ENCODE measurements at regions of chr7 and their contacts with region 1.

Region 1: DNA sequence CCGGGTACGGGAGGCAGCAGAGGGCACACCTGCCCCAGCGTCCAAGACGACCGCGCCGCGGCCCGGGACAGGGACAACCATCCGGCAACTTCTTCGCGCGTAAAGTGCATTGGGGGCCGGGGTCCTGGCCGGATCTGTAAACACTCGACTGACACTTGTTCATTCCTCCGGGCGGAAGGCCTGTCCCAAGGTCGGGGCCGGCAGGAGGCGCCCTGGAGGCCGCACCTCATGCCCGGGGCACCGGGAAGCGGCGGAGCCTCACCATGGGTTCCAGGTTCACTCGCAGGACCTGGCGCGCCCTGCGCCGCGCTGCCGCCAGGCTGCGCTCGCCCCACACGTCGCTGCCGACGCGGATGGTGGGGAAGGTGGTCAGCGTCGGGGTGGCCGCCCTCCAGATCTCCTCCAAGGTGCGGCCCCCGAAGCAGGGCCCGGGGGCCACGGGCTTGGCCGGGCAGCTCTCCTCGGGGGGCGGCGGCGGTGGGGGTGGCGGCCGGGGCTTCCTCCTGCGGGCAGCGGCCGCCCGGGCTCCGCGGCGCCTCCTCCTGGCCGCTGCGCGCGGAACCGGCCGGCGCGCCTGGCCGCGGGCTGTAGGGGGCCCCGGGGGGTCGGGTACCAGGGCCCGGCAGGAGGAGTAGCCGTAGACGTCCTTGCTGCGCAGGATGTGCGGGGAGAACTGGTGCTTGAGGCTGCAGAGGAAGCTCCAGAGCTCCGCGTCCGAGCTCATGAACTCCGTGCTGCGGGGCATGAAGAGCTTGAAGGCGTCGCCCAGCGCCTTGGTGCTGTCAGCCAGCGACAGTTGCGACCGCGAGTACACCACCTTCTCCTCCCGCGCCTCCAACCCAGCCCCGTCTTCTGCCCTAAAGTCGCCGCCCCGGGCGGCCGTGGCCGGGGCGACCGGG is 746 bp downstream of the CCDC71L start:
- DNase-seq: peak; percentile 87
- H3K4me3 ChIP-seq: peak overlapping the region; percentile 50 to 100 (median 98)
- H3K27ac ChIP-seq: peak overlapping the region; percentile 90
- H3K4me1 ChIP-seq: peaks cover 22% of the 10 kb centered on the region
- H3K27me3 ChIP-seq: no peaks in the 10 kb centered on the region
- CTCF ChIP-seq: peak; percentile 86 to 89
- POLR2A ChIP-seq: peak; percentile 68

Region 2: GRCh38 chr7:104980841-104981671 is 1679.2 kb before region 1 on chr7:
- CTCF ChIA-PET with region 1: no interaction called
- POLR2A ChIA-PET with region 1: no interaction called
- dilution Hi-C with region 1: no loop called
- intact Hi-C with region 1: no loop called
- DNase-seq: peak; percentile 82
- H3K4me3 ChIP-seq: no peak overlapping the region
- H3K27ac ChIP-seq: peak overlapping the region; percentile 25
- H3K4me1 ChIP-seq: peaks cover 56% of the 10 kb centered on the region
- H3K27me3 ChIP-seq: no peaks in the 10 kb centered on the region
- CTCF ChIP-seq: peak; percentile 37 to 47
- POLR2A ChIP-seq: no peak

Region 3: DNA sequence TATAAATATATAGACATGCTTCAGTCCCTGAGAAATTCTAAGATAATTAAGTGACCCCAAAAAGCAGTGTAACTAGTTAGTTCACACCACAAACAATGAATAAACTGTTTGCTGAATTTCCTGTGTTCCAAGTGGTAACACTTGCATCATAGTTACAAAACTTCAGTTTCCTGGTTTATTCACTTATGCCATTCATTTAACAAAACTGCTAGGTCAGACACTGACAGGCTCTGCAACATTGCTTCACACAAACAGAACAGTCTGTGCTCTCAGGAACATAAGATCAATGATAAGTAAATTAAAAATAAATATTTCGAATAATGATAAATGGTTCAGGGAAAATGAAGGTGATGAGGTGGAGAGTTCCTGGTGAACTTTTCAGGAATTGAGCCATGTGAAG is 242.1 kb before region 1 on chr7:
- CTCF ChIA-PET with region 1: no interaction called
- POLR2A ChIA-PET with region 1: no interaction called
- dilution Hi-C with region 1: no loop called
- intact Hi-C with region 1: no loop called
- DNase-seq: peak; percentile 54
- H3K4me3 ChIP-seq: no peak overlapping the region
- H3K27ac ChIP-seq: no peak overlapping the region
- H3K4me1 ChIP-seq: peaks cover 9% of the 10 kb centered on the region
- H3K27me3 ChIP-seq: no peaks in the 10 kb centered on the region
- CTCF ChIP-seq: no peak
- POLR2A ChIP-seq: no peak

Region 4: GRCh38 chr7:106461993-106462859 is 198.0 kb before region 1 on chr7:
- CTCF ChIA-PET with region 1: interaction called, 13 read pairs
- POLR2A ChIA-PET with region 1: no interaction called
- dilution Hi-C with region 1: no loop called
- intact Hi-C with region 1: loop called (anchors 1 kb)
- DNase-seq: peak; percentile 83
- H3K4me3 ChIP-seq: no peak overlapping the region
- H3K27ac ChIP-seq: peak overlapping the region; percentile 32
- H3K4me1 ChIP-seq: peaks cover 22% of the 10 kb centered on the region
- H3K27me3 ChIP-seq: no peaks in the 10 kb centered on the region
- CTCF ChIP-seq: peak; percentile 25 to 37
- POLR2A ChIP-seq: no peak

Region 5: GRCh38 chr7:106588422-106589198 is 71.6 kb before region 1 on chr7:
- CTCF ChIA-PET with region 1: interaction called, 30 read pairs
- POLR2A ChIA-PET with region 1: no interaction called
- dilution Hi-C with region 1: no loop called
- intact Hi-C with region 1: loop called (anchors 1 kb)
- DNase-seq: no peak
- H3K4me3 ChIP-seq: no peak overlapping the region
- H3K27ac ChIP-seq: peak overlapping the region; percentile 89
- H3K4me1 ChIP-seq: peaks cover 30% of the 10 kb centered on the region
- H3K27me3 ChIP-seq: no peaks in the 10 kb centered on the region
- CTCF ChIP-seq: no peak
- POLR2A ChIP-seq: no peak

Region 6: DNA sequence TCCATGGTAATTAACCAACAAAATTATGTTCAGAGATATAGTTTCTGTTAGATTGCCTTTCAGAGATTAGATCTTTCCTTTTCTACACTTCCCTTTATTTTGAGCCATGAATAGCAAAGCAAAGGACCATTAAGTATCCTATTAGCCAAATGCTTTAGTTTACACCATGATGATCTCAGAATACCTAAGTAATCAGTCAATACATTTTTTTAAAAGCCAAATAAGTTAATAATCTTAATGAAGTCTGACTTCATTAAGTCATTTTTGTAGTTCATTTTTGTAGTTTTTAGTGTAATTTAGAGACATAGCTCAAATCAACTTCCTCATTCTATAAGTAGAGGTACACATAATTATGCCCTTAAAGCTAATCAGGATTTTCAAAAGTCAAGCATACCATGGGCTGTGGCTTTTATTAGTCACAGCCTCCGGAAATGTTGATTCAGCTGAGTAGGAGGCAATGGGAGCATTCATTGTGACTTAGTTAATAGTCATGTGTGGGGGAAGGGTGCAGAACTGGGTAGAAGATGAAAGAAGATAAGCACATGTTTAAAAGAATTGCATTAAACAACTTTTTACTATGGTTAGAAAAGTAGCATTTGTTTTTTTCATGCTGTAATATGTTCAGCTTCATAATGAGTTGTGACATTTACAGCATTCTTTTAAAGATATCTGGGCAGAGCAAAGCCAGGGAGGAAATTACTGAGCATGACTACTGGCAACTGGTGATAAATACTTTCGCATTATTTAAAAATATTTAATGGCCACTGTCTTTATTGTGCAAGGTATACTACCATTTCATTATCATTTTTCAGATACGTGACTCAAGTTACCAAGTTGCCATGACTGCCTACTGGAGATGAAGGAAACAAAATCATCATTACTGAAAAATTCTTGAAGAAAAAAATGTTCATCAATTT is 58.0 kb after region 1 on chr7:
- CTCF ChIA-PET with region 1: interaction called, 11 read pairs
- POLR2A ChIA-PET with region 1: interaction called, 3 read pairs
- dilution Hi-C with region 1: no loop called
- intact Hi-C with region 1: loop called (anchors 1 kb)
- DNase-seq: peak; percentile 98
- H3K4me3 ChIP-seq: peak overlapping the region in 1 of 3 experiments; percentile 26
- H3K27ac ChIP-seq: peak overlapping the region; percentile 99
- H3K4me1 ChIP-seq: peaks cover 28% of the 10 kb centered on the region
- H3K27me3 ChIP-seq: no peaks in the 10 kb centered on the region
- CTCF ChIP-seq: no peak
- POLR2A ChIP-seq: peak; percentile 45

Region 7: DNA sequence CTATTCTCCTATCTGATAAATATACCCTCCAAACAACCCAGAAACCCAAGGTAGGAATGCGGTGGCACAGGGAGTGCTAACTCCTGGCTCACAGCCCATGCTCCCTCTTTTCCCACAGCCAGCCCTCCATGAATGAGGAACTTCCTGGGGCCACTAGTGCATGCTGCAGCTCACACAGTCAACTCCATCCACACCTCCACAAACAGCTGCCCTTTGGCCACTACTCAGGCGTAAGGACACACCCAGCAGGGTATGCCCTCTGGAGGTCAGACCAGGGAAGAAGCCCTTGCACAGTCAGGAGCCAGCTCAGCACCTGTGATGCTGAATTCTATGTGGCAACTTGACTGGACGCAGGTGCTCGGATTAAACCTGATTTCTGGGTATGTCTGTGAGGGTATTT is 119.7 kb after region 1 on chr7:
- CTCF ChIA-PET with region 1: interaction called, 4 read pairs
- POLR2A ChIA-PET with region 1: no interaction called
- dilution Hi-C with region 1: no loop called
- intact Hi-C with region 1: loop called (anchors 2 kb)
- DNase-seq: no peak
- H3K4me3 ChIP-seq: no peak overlapping the region
- H3K27ac ChIP-seq: no peak overlapping the region
- H3K4me1 ChIP-seq: peaks cover 16% of the 10 kb centered on the region
- H3K27me3 ChIP-seq: no peaks in the 10 kb centered on the region
- CTCF ChIP-seq: no peak
- POLR2A ChIP-seq: no peak

Region 8: GRCh38 chr7:106938803-106939202 is 278.6 kb after region 1 on chr7:
- CTCF ChIA-PET with region 1: interaction called, 4 read pairs
- POLR2A ChIA-PET with region 1: no interaction called
- dilution Hi-C with region 1: no loop called
- intact Hi-C with region 1: loop called (anchors 10 kb)
- DNase-seq: no peak
- H3K4me3 ChIP-seq: no peak overlapping the region
- H3K27ac ChIP-seq: no peak overlapping the region
- H3K4me1 ChIP-seq: no peaks in the 10 kb centered on the region
- H3K27me3 ChIP-seq: no peaks in the 10 kb centered on the region
- CTCF ChIP-seq: no peak
- POLR2A ChIP-seq: no peak